ENCODE measurements at regions of chr14 and their contacts with region 1.

Region 1: GRCh38 chr14:22886500-22887259 is 3.7 kb downstream of the REM2 start:
- DNase-seq: peak; percentile 90
- H3K4me3 Mint-ChIP-seq: peak overlapping the region; percentile 91
- H3K27ac Mint-ChIP-seq: peak overlapping the region; percentile 92
- H3K4me1 Mint-ChIP-seq: peaks cover 37% of the 10 kb centered on the region
- H3K27me3 Mint-ChIP-seq: peaks cover 8% of the 10 kb centered on the region

Region 2: GRCh38 chr14:22519877-22520685 is 366.6 kb before region 1 on chr14:
- intact Hi-C with region 1: no loop called
- DNase-seq: no peak
- H3K4me3 Mint-ChIP-seq: peak overlapping the region; percentile 83
- H3K27ac Mint-ChIP-seq: peak overlapping the region; percentile 90
- H3K4me1 Mint-ChIP-seq: peaks cover 83% of the 10 kb centered on the region
- H3K27me3 Mint-ChIP-seq: no peaks in the 10 kb centered on the region

Region 3: DNA sequence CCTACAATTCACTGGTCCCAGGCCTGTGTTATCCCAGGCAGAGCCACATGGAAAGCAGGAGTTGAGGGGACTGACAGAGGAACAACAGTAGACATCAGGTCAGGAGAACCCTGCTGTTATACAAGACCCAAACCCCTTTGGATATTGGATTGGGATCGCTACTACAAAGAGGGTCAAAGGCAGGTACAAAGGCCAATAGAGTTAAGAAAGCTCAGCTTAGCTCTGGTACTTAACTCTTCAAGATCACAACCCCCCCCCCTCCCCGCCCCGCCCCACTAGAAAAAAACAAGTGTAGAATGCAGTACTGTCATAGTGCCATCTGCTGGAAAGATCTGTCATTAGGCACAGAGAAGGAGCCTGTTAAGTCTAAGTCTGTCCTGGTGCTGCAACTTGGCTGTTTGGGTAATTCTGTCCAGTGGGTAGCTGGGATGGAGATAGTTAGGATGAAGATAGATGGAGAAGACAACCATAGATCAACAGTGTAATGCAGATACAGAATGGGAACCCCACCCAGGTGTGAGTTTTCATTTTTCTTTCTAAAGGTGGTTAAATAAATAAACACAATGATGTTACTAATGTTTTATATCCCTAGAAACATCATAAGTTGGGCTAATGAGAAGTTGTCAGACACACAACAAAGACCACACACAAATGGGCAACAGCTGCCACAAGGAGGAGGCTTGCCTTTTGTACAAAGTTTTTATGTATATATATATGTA is 13.6 kb after region 1 on chr14:
- intact Hi-C with region 1: loop called (anchors 1 kb)
- DNase-seq: peak; percentile 87
- H3K4me3 Mint-ChIP-seq: no peak overlapping the region
- H3K27ac Mint-ChIP-seq: peak overlapping the region; percentile 1
- H3K4me1 Mint-ChIP-seq: peaks cover 14% of the 10 kb centered on the region
- H3K27me3 Mint-ChIP-seq: no peaks in the 10 kb centered on the region

Region 4: GRCh38 chr14:22918804-22919600 is 32.3 kb after region 1 on chr14 and contains the start of gene RBM23:
- intact Hi-C with region 1: loop called (anchors 1 kb)
- DNase-seq: peak; percentile 100
- H3K4me3 Mint-ChIP-seq: peak within 1 kb of the TSS; percentile 95
- H3K27ac Mint-ChIP-seq: peak within 1 kb of the TSS; percentile 100
- H3K4me1 Mint-ChIP-seq: peaks cover 27% of the 10 kb centered on the region
- H3K27me3 Mint-ChIP-seq: peaks cover 2% of the 10 kb centered on the region
- total RNA-seq, gene RBM23: 82.7 and 90.2 TPM in 2 replicates

Measured in activated CD4-positive, alpha-beta T cell treated with anti-CD3 and anti-CD28 coated beads, Interleukin-2, amount 10 ng/mL, durations not matched to agents 24 days and 14 days (primary cell).